ENCODE measurements at regions of chr2 and their contacts with region 1.

Region 1: DNA sequence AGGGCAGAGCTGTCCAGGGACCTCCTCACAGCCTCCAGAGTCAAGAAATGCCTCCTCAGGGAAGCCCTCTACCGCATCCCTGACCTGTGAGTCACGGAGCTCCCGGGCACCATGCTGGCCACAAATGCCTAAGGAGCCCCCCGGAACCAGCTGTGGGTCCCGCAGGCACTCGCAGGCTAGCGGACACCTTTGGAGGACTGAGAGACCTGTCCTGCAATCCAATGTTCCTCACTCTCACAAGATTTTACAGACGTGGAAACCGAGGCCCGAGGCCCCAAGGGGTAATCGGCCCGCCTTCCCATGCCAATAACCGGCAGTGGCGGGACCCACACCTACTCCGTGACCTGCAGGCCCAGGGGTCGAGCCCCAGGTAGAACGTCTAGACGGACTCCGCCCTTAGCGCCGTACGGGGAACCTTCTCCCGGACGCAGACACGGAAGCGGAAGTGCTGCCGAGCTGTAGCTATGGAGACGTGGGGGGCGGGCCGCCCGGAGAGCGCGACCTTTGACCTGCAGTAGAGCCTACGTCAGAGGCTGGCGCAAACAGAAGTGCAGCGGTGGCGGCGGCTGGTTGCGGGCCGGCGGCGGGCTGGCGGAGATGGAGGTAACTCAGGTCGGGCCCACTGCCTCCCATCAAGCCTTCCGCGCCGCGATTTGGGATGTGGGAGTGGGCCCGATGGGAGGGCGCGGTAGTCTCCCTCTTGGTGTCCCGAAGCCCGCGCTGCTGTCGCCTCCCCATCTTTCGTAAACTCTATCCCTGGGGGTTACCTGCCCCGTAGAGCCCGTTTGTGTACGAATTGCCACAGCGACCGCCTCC is at the start of gene GCC2:
- DNase-seq: peak; percentile 93
- H3K4me3 ChIP-seq: peak within 1 kb of the TSS; percentile 48 to 63
- H3K27ac ChIP-seq: peak within 1 kb of the TSS; percentile 85 to 95
- H3K4me1 ChIP-seq: peaks cover 8% of the 10 kb centered on the region
- H3K27me3 ChIP-seq: no peaks in the 10 kb centered on the region
- CTCF ChIP-seq: no peak
- POLR2A ChIP-seq: peak; percentile 95
- total RNA-seq, gene GCC2: 37.5 to 45.7 TPM

Region 2: DNA sequence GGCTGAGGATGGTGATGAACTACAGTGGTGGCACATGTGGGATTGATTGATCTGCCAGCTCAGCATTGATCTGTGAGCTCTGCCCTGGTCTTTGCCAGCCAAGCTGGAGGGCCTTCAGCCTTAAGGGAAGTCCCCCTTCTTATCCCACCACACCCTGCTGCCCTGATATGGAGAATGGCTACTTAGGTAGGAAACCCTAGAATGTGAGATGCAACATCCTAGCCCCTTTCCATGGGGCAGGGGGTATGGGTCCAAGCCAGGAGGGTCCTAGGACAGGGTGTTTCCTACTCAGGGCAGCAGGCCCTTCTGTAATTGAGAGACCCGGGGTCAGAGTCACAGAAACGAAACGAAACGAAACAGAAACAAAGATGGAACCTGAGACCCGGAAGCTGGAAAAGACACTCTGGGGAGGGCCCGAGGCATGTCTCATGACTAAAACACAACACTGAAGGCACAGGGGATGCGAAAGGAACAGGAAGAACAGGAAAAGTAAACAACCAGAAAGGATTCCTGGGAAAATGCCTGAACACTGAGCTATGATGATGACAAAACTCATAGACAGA is 177.1 kb before region 1 on chr2:
- intact Hi-C with region 1: no loop called
- DNase-seq: peak; percentile 39
- H3K4me3 ChIP-seq: no peak overlapping the region
- H3K27ac ChIP-seq: peak overlapping the region; percentile 54 to 76
- H3K4me1 ChIP-seq: no peaks in the 10 kb centered on the region
- H3K27me3 ChIP-seq: no peaks in the 10 kb centered on the region
- CTCF ChIP-seq: no peak
- POLR2A ChIP-seq: no peak

Region 3: GRCh38 chr2:108533832-108534583 is 85.1 kb after region 1 on chr2 and contains the start of gene LIMS1:
- intact Hi-C with region 1: loop called (anchors 1 kb)
- DNase-seq: peak; percentile 92
- H3K4me3 ChIP-seq: peak within 1 kb of the TSS; percentile 71 to 84
- H3K27ac ChIP-seq: peak within 1 kb of the TSS; percentile 98 to 100
- H3K4me1 ChIP-seq: no peaks in the 10 kb centered on the region
- H3K27me3 ChIP-seq: no peaks in the 10 kb centered on the region
- CTCF ChIP-seq: peak in 3 of 4 experiments; percentile 9 to 34 (median 12)
- POLR2A ChIP-seq: peak; percentile 88
- total RNA-seq, gene LIMS1: 82.9 to 90.4 TPM

Region 4: DNA sequence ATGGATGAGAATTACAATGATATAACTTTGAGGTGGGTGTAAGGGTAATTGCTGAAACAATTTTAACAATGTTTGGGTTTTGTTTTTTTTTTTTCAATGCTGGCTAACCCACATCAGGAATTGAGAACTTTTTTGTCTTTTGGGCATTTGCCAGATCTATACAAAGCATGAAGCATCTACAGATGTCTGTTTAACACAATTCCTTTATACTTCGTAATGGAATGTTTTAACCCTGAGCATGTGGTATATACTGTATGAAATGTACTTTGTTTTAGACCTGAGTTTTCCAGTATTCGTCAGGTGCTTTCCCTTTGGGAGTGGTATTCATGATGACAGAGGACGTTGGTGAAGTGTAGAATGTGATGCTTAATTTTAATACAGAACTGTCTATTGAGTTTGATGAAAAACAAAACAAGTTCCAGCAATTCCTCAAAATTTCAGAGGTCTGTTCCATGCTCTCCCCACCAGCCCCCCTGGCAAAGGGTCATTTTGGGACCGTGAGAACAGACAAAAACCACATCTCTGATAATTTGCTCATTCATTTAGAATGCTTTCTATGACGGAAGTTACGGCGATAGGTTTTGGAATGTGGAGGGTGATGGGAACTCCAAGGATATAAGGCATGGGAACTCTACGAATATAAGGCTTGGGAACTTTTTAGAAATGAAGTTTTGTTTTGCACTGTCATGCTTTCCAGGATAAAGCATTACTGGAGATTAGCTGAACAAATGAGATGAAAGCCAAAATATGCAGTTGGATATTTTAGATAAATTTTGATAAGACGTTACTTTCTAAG is 99.5 kb after region 1 on chr2:
- intact Hi-C with region 1: no loop called
- DNase-seq: no peak
- H3K4me3 ChIP-seq: no peak overlapping the region
- H3K27ac ChIP-seq: no peak overlapping the region
- H3K4me1 ChIP-seq: no peaks in the 10 kb centered on the region
- H3K27me3 ChIP-seq: no peaks in the 10 kb centered on the region
- CTCF ChIP-seq: no peak
- POLR2A ChIP-seq: no peak